ENCODE measurements at regions of chr1 and their contacts with region 1.

Region 1: DNA sequence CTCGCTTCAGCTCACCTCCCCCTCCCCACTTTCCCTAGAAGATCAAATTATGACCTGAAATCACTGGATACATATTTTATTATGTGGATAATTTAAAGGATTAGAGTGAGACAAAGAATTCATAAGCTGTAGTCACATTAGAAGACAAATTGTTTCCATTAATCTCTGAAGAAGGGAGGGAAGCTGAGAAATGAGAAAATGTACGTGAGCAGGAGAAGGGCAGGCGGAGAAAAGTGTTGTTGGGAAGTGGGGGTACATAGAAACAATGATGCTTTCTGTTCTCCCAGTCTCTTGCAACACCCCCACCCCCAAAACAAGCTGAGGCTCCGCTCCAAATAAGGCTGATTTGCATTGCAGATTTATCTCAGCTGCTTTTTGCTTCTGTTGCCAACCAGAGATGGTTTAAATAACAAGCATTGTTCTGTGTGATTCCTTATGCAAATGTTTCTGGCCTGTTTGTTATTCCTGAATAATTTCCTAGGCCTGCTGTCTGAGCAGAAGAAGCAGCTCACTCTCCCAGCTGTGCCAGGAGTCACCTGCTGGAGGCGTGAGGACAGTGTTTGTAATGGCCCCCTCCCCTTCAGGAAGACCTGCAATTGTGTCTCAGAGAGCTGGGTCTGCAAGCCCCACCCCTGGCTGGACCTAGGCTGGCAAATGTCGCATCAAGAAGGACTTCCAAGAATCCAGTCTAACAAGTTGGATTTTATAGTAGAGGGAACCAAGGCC is 121.8 kb upstream of the TNR start:
- DNase-seq: peak in 9 of 10 donors; percentile 53 to 94 (median 83)
- H3K4me3 ChIP-seq: peak overlapping the region in 5 of 59 donors; percentile 6 to 32 (median 20)
- H3K27ac ChIP-seq: peak overlapping the region; percentile 62 to 98 (median 93)
- H3K27me3 ChIP-seq: no peaks in the 10 kb centered on the region
- CTCF ChIP-seq: peak in 14 of 56 donors; percentile 6 to 34 (median 17)

Region 2: DNA sequence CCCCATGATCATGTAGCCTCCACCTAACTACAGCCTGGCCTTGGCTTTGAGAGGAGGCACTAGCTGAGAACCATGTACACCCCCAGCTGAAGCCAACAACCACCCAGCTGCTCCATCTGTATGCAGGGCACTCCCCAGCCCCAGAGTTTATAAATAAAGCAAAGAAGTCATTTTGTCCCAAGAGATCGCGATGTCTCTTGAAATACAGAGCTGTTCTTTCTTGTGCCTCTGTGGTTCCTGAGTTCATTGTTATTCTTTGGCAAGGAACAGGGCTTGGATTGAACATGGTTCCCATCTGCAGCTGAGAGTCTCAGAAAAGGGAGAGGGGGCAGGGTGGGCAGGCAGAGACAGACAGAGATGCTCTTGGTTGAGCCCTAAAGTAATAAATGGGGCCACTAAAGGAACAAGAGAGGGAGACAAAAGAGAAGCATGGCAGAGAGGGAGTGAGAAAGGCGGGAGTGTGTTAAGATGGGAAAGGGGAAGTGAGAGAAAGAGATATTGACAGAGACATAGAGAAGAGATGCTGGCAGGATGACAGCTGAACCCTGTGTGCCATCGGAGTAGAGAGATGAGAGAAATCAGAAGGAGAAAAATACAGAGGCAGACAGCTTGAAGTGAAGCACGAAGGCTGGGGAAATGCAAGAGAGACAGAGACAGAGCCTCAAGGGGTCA is 185.1 kb before region 1 on chr1:
- intact Hi-C with region 1: loop called in 1 of 2 experiments (anchors 2 kb)
- DNase-seq: peak in 8 of 10 donors; percentile 28 to 84 (median 67)
- H3K4me3 ChIP-seq: peak overlapping the region in 4 of 59 donors; percentile 5 to 33 (median 11)
- H3K27ac ChIP-seq: peak overlapping the region in 21 of 59 donors; percentile 4 to 69 (median 41)
- H3K27me3 ChIP-seq: peaks cover 0 to 12% (median 0%) of the 10 kb centered on the region in 45 donors
- CTCF ChIP-seq: peak in 1 of 56 donors; percentile 10

Region 3: DNA sequence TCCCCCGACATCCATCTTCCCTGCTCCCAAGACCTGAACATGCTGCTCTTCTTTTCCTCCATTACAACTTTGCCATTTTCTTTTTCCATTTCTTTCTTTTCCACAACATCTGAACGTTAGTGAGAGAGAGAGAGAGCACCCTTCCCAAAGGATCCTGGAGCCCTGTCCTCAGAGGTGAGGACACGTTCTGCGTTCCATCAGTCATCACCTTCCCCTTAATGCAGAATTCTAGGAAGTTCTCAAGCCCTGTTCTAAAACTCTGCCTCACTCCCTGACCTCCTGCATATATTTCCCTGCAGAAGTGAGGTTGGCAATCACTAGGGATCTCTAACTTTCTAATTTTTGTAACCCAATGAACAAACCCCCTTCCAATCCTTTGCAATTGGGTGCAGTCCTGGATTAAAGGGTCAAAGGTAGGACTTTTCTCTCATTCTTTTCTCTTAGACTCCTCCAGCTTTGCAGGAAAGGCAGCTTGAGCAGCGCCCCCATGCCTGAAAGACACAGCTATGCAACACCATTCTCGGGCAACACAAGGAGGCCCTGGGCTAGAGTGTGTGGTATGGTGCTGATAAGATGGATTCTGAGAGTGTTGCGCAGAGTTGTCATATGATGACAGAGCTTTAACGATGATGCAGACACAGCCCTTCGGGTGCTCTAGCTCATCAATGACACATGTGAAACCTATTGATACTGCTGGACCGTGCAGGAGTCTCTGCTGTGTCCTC is 62.6 kb before region 1 on chr1:
- intact Hi-C with region 1: no loop called
- DNase-seq: no peak
- H3K4me3 ChIP-seq: no peak overlapping the region
- H3K27ac ChIP-seq: no peak overlapping the region
- H3K27me3 ChIP-seq: no peaks in the 10 kb centered on the region
- CTCF ChIP-seq: no peak

Region 4: DNA sequence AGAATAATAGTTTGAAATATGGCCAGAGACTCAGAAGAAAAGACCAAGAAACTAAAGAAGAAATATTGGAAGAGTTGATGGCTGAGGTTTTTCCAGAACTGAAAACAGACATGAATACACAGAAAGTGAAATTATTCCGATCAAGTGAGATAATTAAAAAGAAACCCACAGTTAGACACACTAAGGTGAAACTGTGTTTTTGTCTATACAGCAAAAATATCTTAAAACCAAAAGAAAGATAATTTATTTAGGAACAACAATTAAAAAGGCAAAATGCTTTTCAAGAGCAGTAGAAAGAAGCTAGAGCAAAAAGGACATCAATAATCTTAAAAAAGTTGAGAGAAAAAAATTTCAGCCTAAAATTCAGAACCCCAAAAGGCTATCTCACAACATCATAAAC is 225.6 kb after region 1 on chr1:
- intact Hi-C with region 1: no loop called
- DNase-seq: no peak
- H3K4me3 ChIP-seq: no peak overlapping the region
- H3K27ac ChIP-seq: no peak overlapping the region
- H3K27me3 ChIP-seq: no peaks in the 10 kb centered on the region
- CTCF ChIP-seq: no peak

Measured in dorsolateral prefrontal cortex (tissue), 120 donors.